PC-3 (cell line): ENCODE measurements at regions of chr18 and their contacts with region 1.

Region 1: GRCh38 chr18:49510393-49511115 is 23.5 kb upstream of the C18orf32 start:
- DNase-seq: peak; percentile 55
- ATAC-seq: peak; percentile 79
- H3K4me3 ChIP-seq: no peak overlapping the region
- H3K27ac ChIP-seq: no peak overlapping the region
- H3K4me1 ChIP-seq: no peaks in the 10 kb centered on the region
- H3K27me3 ChIP-seq: no peaks in the 10 kb centered on the region
- CTCF ChIP-seq: peak; percentile 63

Region 2: DNA sequence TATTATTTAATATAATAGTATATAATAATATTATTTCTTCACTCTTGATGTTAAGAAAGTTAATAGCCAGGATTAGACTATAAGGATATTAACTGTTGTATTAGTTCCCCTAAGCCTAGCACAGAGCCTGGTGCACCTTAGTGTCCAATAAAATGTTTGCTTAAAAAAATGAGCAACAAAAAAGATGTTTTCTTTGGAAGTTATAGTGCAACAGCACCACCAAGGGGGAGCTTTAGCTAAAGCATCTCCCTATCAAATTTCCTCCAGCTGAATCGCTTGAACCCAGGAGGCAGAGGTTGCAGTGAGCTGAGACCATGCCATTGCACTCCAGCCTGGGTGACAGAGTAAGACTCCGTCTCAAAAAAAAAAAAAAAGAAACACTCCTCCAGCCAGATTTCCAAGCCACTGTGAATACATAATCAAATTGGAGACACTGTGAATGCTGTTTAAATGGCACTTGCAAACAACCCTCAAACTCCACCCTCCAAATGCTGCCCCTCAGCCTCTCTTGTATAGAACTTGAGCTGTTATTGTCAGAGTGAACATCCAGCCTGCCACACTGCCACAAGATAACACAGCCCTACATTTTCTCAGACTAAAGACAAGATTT is 272.0 kb before region 1 on chr18:
- CTCF ChIA-PET with region 1: interaction called, 11 read pairs
- POLR2A ChIA-PET with region 1: no interaction called
- intact Hi-C with region 1: no loop called
- DNase-seq: peak; percentile 35
- ATAC-seq: no peak
- H3K4me3 ChIP-seq: no peak overlapping the region
- H3K27ac ChIP-seq: no peak overlapping the region
- H3K4me1 ChIP-seq: no peaks in the 10 kb centered on the region
- H3K27me3 ChIP-seq: no peaks in the 10 kb centered on the region
- CTCF ChIP-seq: peak; percentile 51

Region 3: DNA sequence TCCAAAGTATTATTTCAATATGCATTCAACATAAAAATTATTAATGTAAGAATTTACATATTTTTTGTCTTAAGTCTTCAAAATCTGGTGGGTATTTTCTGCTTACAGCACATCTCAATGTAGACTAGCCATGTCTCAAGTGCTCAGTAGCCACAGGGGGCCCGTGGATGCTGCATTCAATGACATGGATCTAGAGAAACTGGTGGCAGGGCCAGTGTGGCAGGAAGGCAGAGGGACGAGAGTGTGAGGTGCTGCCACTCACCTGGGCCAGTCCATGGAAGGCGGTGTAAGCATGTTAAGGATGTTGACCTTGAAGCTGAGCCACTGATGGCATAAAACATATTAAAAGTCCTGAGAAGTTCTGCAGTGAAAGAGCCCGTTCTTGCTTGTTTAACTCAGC is 45.1 kb after region 1 on chr18:
- CTCF ChIA-PET with region 1: interaction called, 3 read pairs
- POLR2A ChIA-PET with region 1: no interaction called
- intact Hi-C with region 1: loop called (anchors 2 kb)
- DNase-seq: no peak
- ATAC-seq: no peak
- H3K4me3 ChIP-seq: no peak overlapping the region
- H3K27ac ChIP-seq: no peak overlapping the region
- H3K4me1 ChIP-seq: no peaks in the 10 kb centered on the region
- H3K27me3 ChIP-seq: no peaks in the 10 kb centered on the region
- CTCF ChIP-seq: no peak

Region 4: GRCh38 chr18:49768051-49768391 is 257.5 kb after region 1 on chr18:
- CTCF ChIA-PET with region 1: no interaction called
- POLR2A ChIA-PET with region 1: no interaction called
- intact Hi-C with region 1: loop called (anchors 5 kb)
- DNase-seq: peak; percentile 52
- ATAC-seq: peak; percentile 71
- H3K4me3 ChIP-seq: no peak overlapping the region
- H3K27ac ChIP-seq: no peak overlapping the region
- H3K4me1 ChIP-seq: no peaks in the 10 kb centered on the region
- H3K27me3 ChIP-seq: no peaks in the 10 kb centered on the region
- CTCF ChIP-seq: peak; percentile 61

Region 5: GRCh38 chr18:49784427-49785185 is 274.1 kb after region 1 on chr18:
- CTCF ChIA-PET with region 1: no interaction called
- POLR2A ChIA-PET with region 1: no interaction called
- intact Hi-C with region 1: loop called (anchors 5 kb)
- DNase-seq: peak; percentile 23
- ATAC-seq: peak; percentile 27
- H3K4me3 ChIP-seq: no peak overlapping the region
- H3K27ac ChIP-seq: no peak overlapping the region
- H3K4me1 ChIP-seq: 0 out of 2 replicates have a peak, but pooled peaks cover 4% of the 10 kb centered on the region
- H3K27me3 ChIP-seq: no peaks in the 10 kb centered on the region
- CTCF ChIP-seq: peak; percentile 39; the same call in 1 of the 2 replicates

Region 6: DNA sequence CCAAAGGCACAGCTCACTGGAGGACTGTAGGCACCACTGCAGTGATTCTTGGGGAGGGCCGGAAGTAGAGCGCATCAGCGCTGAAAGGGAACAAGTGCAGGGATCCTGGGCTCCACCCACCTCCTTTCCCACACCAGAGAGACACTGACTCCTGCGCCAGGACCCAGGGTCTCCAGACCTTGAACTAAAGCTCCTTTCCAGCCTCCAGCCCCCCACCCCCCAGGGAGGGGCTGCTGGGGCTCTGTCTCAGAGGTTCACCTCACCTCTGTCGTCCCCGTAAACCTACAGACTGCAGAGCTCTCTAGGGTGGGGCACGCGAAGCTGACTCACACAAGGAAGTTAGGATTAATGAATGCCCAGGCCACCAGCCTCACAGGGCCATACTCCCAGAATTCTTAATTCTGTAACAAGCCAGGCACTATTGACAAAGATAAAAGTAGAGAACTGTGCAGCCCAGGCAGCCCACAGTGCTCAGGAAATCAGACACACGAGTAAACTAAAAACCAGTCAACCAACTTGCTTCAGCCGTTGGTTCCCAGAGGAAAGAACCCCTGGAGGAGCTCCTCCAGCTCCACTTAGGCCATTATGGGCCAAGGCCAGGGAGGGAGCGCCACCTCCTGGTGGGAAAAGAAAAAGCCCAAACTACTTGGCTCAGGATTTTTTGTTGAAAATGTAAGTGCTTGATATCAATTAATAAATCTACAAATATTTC is 347.9 kb after region 1 on chr18:
- CTCF ChIA-PET with region 1: interaction called, 5 read pairs
- POLR2A ChIA-PET with region 1: no interaction called
- intact Hi-C with region 1: loop called (anchors 1 kb)
- DNase-seq: peak; percentile 61
- ATAC-seq: peak; percentile 80
- H3K4me3 ChIP-seq: no peak overlapping the region
- H3K27ac ChIP-seq: peak overlapping the region; percentile 23; the same call in 1 of the 2 replicates
- H3K4me1 ChIP-seq: peaks cover 7% of the 10 kb centered on the region; the same call in 1 of the 2 replicates
- H3K27me3 ChIP-seq: no peaks in the 10 kb centered on the region
- CTCF ChIP-seq: peak; percentile 77

Region 7: GRCh38 chr18:51153659-51154371 is 1643.3 kb after region 1 on chr18:
- CTCF ChIA-PET with region 1: no interaction called
- POLR2A ChIA-PET with region 1: no interaction called
- intact Hi-C with region 1: no loop called
- DNase-seq: no peak
- ATAC-seq: no peak
- H3K4me3 ChIP-seq: no peak overlapping the region
- H3K27ac ChIP-seq: no peak overlapping the region
- H3K4me1 ChIP-seq: no peaks in the 10 kb centered on the region
- H3K27me3 ChIP-seq: no peaks in the 10 kb centered on the region
- CTCF ChIP-seq: no peak